ENCODE measurements at regions of chr12 and their contacts with region 1.

Region 1: DNA sequence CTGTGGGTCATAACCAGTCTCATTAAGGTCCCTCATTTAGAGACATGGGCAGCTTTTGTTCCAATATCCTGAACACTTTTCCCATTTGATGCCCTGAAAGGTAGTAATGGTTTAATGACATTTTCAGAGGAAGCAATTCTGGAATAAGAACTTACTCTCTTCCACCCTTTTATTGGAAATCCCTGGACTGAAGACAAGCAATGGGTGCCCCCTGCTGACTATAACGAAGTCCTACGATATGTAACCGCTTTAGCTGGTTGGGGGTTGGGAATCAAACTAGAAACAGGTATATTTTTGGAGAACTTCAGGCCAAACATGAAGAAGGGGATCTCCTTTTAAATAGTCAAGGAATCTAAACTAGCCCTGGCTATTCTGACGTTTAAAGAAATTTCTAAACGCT is 20.5 kb downstream of the SARNP start:
- DNase-seq: no peak
- H3K4me3 Mint-ChIP-seq: no peak overlapping the region
- H3K27ac Mint-ChIP-seq: no peak overlapping the region
- H3K4me1 Mint-ChIP-seq: peaks cover 17% of the 10 kb centered on the region
- H3K27me3 Mint-ChIP-seq: no peaks in the 10 kb centered on the region

Region 2: DNA sequence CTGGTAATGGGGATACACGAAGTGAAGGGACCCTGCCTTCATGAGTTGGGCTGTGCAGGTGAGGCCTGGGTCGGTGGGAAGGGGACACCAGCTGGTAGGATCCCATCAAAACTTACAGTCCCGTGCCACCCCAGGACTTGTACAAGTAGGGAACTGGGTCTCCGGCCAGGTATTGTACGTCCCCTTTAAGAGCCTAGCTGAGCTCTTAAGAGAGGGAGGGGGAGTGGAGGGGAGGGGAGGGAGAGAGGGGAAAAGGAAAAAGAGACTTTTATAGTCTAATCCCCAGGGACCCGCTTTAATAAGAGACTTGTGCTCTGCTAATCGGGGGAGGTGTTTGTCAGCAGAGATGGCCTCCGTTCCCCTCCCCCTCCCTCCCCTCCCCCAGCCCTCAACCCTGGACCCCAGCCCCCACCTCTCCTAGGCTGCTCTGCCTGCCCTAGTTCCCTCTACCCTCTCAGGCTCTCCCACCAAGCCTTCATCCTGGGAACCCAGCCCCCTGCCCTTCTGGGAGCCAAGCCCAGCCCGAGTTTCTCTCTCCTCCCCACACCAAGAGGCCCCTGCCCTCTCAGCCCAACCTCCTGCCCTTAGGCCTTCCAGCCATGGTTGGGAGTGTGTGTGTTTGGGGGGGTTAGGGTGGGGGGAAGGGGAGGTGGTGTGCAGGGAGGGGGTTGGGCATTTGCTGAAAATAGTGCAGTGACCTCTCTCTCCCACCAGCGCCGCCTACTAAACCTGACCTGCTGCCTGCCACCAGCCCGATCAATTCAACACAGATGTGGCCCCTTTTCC is 51.5 kb before region 1 on chr12:
- CTCF ChIA-PET with region 1: interaction called, 69 read pairs
- POLR2A ChIA-PET with region 1: no interaction called
- intact Hi-C with region 1: no loop called
- DNase-seq: no peak
- H3K4me3 Mint-ChIP-seq: no peak overlapping the region
- H3K27ac Mint-ChIP-seq: no peak overlapping the region
- H3K4me1 Mint-ChIP-seq: peaks cover 22% of the 10 kb centered on the region
- H3K27me3 Mint-ChIP-seq: no peaks in the 10 kb centered on the region

Region 3: DNA sequence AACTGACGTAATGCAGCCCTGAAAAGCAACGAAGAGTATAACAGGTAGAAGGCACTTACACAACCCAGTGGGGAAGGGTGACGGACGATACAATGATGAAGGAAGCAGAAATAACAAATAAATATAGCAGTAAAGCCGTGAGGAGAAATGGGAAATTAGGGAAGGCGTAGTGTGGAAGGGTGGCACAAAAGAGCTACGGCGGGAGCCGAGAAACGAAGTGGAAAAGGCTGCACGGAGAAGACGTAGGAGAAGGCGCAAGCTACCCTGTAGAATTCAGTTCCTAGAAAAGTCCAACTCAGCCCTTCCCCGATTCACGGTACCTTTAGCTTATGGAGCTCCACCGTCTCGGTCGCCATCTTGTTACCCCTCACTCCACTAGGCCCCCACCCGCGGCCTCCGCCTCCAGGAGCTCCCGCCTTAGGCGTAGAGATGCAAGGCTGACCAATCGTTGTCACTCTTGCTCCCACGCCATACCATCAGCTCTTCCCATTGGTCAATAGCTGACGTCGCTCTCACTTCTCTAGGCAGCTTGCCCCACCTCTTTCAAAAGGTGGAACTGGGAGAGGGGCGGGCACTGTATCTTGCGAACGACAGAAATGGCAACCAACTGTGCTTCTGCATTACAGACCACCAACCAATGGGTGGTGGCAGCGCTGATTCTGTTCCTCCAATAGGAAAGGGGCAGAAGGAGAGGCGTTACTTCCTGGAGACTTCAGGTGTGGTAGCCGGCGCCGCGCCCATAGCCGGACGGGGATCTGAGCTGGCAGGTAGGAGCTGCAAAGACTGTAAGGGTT is 20.5 kb after region 1 on chr12 and contains the starts of genes ORMDL2 and SARNP:
- CTCF ChIA-PET with region 1: interaction called, 11 read pairs
- POLR2A ChIA-PET with region 1: interaction called, 3 read pairs
- intact Hi-C with region 1: no loop called
- DNase-seq: peak; percentile 99
- H3K4me3 Mint-ChIP-seq: no peak within 1 kb of the TSS
- H3K27ac Mint-ChIP-seq: no peak within 1 kb of the TSS
- H3K4me1 Mint-ChIP-seq: peaks cover 49% of the 10 kb centered on the region
- H3K27me3 Mint-ChIP-seq: no peaks in the 10 kb centered on the region
- total RNA-seq, gene ORMDL2: 37.9 to 41.2 TPM
- total RNA-seq, gene SARNP: 104 to 110 TPM

Region 4: GRCh38 chr12:55839345-55840140 is 42.5 kb after region 1 on chr12:
- CTCF ChIA-PET with region 1: no interaction called
- POLR2A ChIA-PET with region 1: no interaction called
- intact Hi-C with region 1: no loop called
- DNase-seq: no peak
- H3K4me3 Mint-ChIP-seq: no peak overlapping the region
- H3K27ac Mint-ChIP-seq: no peak overlapping the region
- H3K4me1 Mint-ChIP-seq: no peaks in the 10 kb centered on the region
- H3K27me3 Mint-ChIP-seq: no peaks in the 10 kb centered on the region

Region 5: GRCh38 chr12:55996715-55997534 is 199.9 kb after region 1 on chr12 and contains the start of gene SUOX:
- CTCF ChIA-PET with region 1: no interaction called
- POLR2A ChIA-PET with region 1: no interaction called
- intact Hi-C with region 1: no loop called
- DNase-seq: peak; percentile 61
- H3K4me3 Mint-ChIP-seq: peak within 1 kb of the TSS; percentile 60
- H3K27ac Mint-ChIP-seq: no peak within 1 kb of the TSS
- H3K4me1 Mint-ChIP-seq: peaks cover 19% of the 10 kb centered on the region
- H3K27me3 Mint-ChIP-seq: peaks cover 5% of the 10 kb centered on the region
- total RNA-seq, gene SUOX: 2.4 to 2.7 TPM

Region 6: GRCh38 chr12:56078990-56079664 is 282.1 kb after region 1 on chr12:
- CTCF ChIA-PET with region 1: no interaction called
- POLR2A ChIA-PET with region 1: no interaction called
- intact Hi-C with region 1: no loop called
- DNase-seq: peak; percentile 74
- H3K4me3 Mint-ChIP-seq: peak overlapping the region; percentile 74
- H3K27ac Mint-ChIP-seq: no peak overlapping the region
- H3K4me1 Mint-ChIP-seq: peaks cover 5% of the 10 kb centered on the region
- H3K27me3 Mint-ChIP-seq: peaks cover 7% of the 10 kb centered on the region

Region 7: GRCh38 chr12:56449622-56449984 is 652.5 kb after region 1 on chr12:
- CTCF ChIA-PET with region 1: no interaction called
- POLR2A ChIA-PET with region 1: no interaction called
- intact Hi-C with region 1: no loop called
- DNase-seq: no peak
- H3K4me3 Mint-ChIP-seq: peak overlapping the region; percentile 88
- H3K27ac Mint-ChIP-seq: peak overlapping the region; percentile 93
- H3K4me1 Mint-ChIP-seq: peaks cover 18% of the 10 kb centered on the region
- H3K27me3 Mint-ChIP-seq: no peaks in the 10 kb centered on the region